T-cell (primary cell): ENCODE measurements at regions of chr15 and their contacts with region 1.

Region 1: GRCh38 chr15:89958074-89958805 is 42.9 kb upstream of the ZNF710 start:
- DNase-seq: no peak
- ATAC-seq: no peak
- H3K4me3 ChIP-seq: no peak overlapping the region
- H3K4me3 Mint-ChIP-seq: no peak overlapping the region
- H3K27ac ChIP-seq: no peak overlapping the region
- H3K27ac Mint-ChIP-seq: no peak overlapping the region
- H3K4me1 ChIP-seq: no peaks in the 10 kb centered on the region
- H3K4me1 Mint-ChIP-seq: no peaks in the 10 kb centered on the region
- H3K27me3 ChIP-seq: no peaks in the 10 kb centered on the region
- H3K27me3 Mint-ChIP-seq: no peaks in the 10 kb centered on the region

Region 2: DNA sequence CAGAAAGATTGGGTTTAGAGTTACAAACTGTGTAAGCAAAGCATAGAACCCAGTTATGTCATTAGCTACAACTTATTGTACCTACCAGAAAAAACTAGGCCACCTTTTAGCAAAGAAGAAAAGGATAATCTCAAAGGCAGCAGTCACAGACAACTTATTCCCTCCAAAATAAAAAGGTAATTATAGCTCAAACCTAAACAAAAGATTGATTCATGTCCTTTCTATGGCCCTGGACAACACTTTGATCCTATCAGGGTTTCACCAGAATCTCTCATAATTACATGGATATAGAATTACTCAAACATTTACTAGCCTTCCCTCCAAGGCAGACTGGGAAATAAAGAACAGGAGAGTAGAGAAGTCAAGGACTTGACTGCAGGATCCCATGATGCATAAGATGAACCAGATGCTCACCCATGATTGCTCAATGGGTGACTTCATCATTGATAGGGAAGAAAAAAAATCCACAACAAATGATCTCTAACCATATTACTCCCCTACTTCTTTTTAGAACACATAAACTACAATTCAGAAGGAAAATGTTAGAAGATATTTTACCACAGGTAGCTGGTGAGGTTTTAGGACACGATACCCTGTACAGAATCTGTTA is 1429.1 kb before region 1 on chr15:
- CTCF ChIA-PET with region 1: no interaction called
- POLR2A ChIA-PET with region 1: interaction called in 1 of 2 experiments, 10 read pairs
- DNase-seq: no peak
- ATAC-seq: no peak
- H3K4me3 ChIP-seq: no peak overlapping the region
- H3K4me3 Mint-ChIP-seq: no peak overlapping the region
- H3K27ac ChIP-seq: no peak overlapping the region
- H3K27ac Mint-ChIP-seq: no peak overlapping the region
- H3K4me1 ChIP-seq: no peaks in the 10 kb centered on the region
- H3K4me1 Mint-ChIP-seq: peaks cover 1 to 18% (median 7%) of the 10 kb centered on the region in 3 donors
- H3K27me3 ChIP-seq: no peaks in the 10 kb centered on the region
- H3K27me3 Mint-ChIP-seq: no peaks in the 10 kb centered on the region

Region 3: DNA sequence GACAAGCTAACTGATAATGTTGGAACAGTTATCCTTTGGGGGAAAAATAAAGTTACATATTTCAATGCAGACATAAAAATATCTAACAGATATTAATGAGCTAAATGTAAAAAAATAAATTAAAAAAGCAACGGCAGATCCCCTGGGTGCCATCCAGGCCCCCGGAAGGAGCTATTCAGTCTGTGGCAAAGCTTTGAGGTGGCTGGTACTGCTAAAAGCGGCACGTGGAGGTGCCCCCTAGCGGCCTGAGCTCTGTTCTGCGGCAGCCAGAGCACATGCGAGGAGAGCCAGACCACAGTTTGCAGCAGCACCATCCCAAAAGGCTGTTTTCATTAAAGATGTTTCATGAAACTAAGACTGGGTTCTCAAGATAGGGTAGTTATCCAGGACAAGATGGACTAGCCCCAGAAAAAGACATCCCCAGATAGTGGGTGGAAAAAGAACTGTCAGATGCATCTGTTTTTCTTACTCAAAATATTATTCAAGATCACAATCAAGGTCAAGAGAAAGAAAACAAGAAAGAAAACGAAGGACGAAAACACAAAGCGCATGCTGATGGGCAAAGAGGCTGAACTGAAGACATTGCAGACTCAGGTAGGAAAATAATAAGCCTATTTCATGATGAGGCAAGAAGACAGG is 83.2 kb before region 1 on chr15:
- CTCF ChIA-PET with region 1: no interaction called
- POLR2A ChIA-PET with region 1: no interaction called
- DNase-seq: peak; percentile 55 to 88 (median 77)
- ATAC-seq: peak; percentile 100
- H3K4me3 ChIP-seq: no peak overlapping the region
- H3K4me3 Mint-ChIP-seq: no peak overlapping the region
- H3K27ac ChIP-seq: no peak overlapping the region
- H3K27ac Mint-ChIP-seq: peak overlapping the region in 1 of 2 donors; percentile 44
- H3K4me1 ChIP-seq: peaks cover 0 to 4% of the 10 kb centered on the region in 2 experiments
- H3K4me1 Mint-ChIP-seq: peaks cover 4% of the 10 kb centered on the region in 3 donors
- H3K27me3 ChIP-seq: no peaks in the 10 kb centered on the region
- H3K27me3 Mint-ChIP-seq: no peaks in the 10 kb centered on the region